PC-9 (cell line): ENCODE measurements at regions of chr2 and their contacts with region 1.

Region 1: GRCh38 chr2:70480468-70480867 is 73.2 kb downstream of the TGFA start:
- DNase-seq: no peak
- H3K4me3 ChIP-seq: no peak overlapping the region
- H3K27ac ChIP-seq: no peak overlapping the region
- H3K4me1 ChIP-seq: peaks cover 28% of the 10 kb centered on the region
- H3K27me3 ChIP-seq: no peaks in the 10 kb centered on the region
- CTCF ChIP-seq: no peak

Region 2: GRCh38 chr2:70340921-70341765 is 139.3 kb before region 1 on chr2:
- CTCF ChIA-PET with region 1: interaction called, 3 read pairs
- POLR2A ChIA-PET with region 1: no interaction called
- intact Hi-C with region 1: loop called (anchors 5 kb)
- DNase-seq: peak; percentile 65 to 70
- H3K4me3 ChIP-seq: no peak overlapping the region
- H3K27ac ChIP-seq: no peak overlapping the region
- H3K4me1 ChIP-seq: peaks cover 17% of the 10 kb centered on the region
- H3K27me3 ChIP-seq: no peaks in the 10 kb centered on the region
- CTCF ChIP-seq: peak; percentile 90

Region 3: DNA sequence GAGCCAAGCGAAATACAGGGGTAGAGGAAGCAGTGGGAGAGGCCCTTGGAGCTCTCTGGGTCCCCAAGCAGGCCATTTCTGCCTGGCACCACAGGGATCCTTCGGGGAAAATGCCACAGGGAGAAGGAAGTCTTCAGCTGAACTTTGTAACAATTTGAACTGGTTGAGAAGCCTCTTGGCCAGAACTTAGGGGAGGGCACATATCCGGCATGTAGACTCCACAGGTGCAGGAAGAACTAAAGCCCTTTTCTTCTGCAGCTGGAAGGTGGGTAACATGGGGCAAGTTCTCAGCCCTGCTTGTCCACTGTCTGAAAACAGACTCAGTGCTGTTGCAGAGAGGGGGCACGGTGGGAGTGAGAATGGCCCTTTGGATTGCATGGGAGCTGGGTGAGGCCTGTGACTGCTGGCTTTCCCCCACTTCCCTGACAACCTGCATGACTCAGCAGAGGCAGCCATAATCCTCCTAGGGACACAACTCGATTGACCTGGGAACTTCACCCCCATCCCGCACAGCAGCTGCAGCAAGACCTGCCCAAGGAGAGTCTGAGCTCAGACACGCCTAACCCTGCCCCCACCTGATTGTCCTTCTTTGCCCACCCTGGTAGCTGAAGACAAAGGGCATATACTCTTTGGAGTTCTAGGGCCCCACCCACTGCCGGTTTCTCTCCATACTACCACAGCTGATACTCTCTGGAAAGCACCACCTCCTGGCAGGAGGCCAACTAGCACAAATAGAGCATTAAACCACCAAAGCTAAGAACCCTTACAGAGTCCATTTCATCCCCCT is 77.0 kb before region 1 on chr2:
- CTCF ChIA-PET with region 1: no interaction called
- POLR2A ChIA-PET with region 1: no interaction called
- intact Hi-C with region 1: loop called (anchors 5 kb)
- DNase-seq: peak; percentile 73 to 85
- H3K4me3 ChIP-seq: peak overlapping the region; percentile 59
- H3K27ac ChIP-seq: peak overlapping the region; percentile 96
- H3K4me1 ChIP-seq: peaks cover 43% of the 10 kb centered on the region
- H3K27me3 ChIP-seq: no peaks in the 10 kb centered on the region
- CTCF ChIP-seq: no peak

Region 4: GRCh38 chr2:70523996-70524965 is 43.8 kb after region 1 on chr2:
- CTCF ChIA-PET with region 1: no interaction called
- POLR2A ChIA-PET with region 1: interaction called, 3 read pairs
- intact Hi-C with region 1: loop called (anchors 1 kb)
- DNase-seq: peak; percentile 96 to 98
- H3K4me3 ChIP-seq: peak overlapping the region; percentile 41; the same call in 1 of the 2 replicates
- H3K27ac ChIP-seq: peak overlapping the region; percentile 100
- H3K4me1 ChIP-seq: peaks cover 74% of the 10 kb centered on the region
- H3K27me3 ChIP-seq: no peaks in the 10 kb centered on the region
- CTCF ChIP-seq: no peak

Region 5: GRCh38 chr2:70546376-70546775 is 65.9 kb after region 1 on chr2:
- CTCF ChIA-PET with region 1: no interaction called
- POLR2A ChIA-PET with region 1: no interaction called
- intact Hi-C with region 1: no loop called
- DNase-seq: no peak
- H3K4me3 ChIP-seq: no peak overlapping the region
- H3K27ac ChIP-seq: peak overlapping the region; percentile 24; the same call in 1 of the 2 replicates
- H3K4me1 ChIP-seq: peaks cover 66% of the 10 kb centered on the region
- H3K27me3 ChIP-seq: no peaks in the 10 kb centered on the region
- CTCF ChIP-seq: no peak